Caco-2 (cell line): ENCODE measurements at regions of chr3 and their contacts with region 1.

Region 1: GRCh38 chr3:192834428-192834827 is 83.2 kb downstream of the MB21D2 start:
- DNase-seq: no peak
- H3K4me3 ChIP-seq: no peak overlapping the region
- H3K4me3 Mint-ChIP-seq: no peak overlapping the region
- H3K27ac Mint-ChIP-seq: no peak overlapping the region
- H3K4me1 ChIP-seq: no peaks in the 10 kb centered on the region; the same call in 1 of the 2 replicates
- H3K4me1 Mint-ChIP-seq: no peaks in the 10 kb centered on the region
- H3K27me3 ChIP-seq: no peaks in the 10 kb centered on the region
- H3K27me3 Mint-ChIP-seq: no peaks in the 10 kb centered on the region
- CTCF ChIP-seq: no peak

Region 2: DNA sequence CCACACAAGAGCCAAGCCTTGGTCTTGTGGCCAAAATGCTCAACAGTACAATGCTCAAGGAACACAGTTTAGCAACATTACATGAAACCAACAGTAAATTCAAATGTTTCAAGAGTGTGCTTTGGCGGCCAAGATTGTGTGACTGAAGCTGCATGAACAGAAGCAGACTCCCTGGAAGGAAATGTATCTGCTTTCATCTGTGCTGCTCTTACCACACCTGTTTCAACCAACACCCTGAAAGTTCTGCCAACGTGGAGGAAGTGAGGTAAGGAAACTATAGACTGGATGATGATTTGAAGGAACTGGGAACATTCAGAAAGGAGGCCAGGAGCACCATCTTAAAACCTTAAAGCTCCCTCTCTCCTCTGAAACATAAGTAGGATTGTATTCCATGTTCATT is 27.5 kb after region 1 on chr3:
- CTCF ChIA-PET with region 1: no interaction called
- POLR2A ChIA-PET with region 1: no interaction called
- intact Hi-C with region 1: no loop called
- DNase-seq: no peak
- H3K4me3 ChIP-seq: no peak overlapping the region
- H3K4me3 Mint-ChIP-seq: no peak overlapping the region
- H3K27ac Mint-ChIP-seq: no peak overlapping the region
- H3K4me1 ChIP-seq: peaks cover 9% of the 10 kb centered on the region; the same call in 1 of the 2 replicates
- H3K4me1 Mint-ChIP-seq: peaks cover 22% of the 10 kb centered on the region
- H3K27me3 ChIP-seq: no peaks in the 10 kb centered on the region
- H3K27me3 Mint-ChIP-seq: no peaks in the 10 kb centered on the region
- CTCF ChIP-seq: no peak

Region 3: GRCh38 chr3:192915304-192915703 is 80.9 kb after region 1 on chr3:
- CTCF ChIA-PET with region 1: no interaction called
- POLR2A ChIA-PET with region 1: no interaction called
- intact Hi-C with region 1: no loop called
- DNase-seq: peak; percentile 54 to 63
- H3K4me3 ChIP-seq: no peak overlapping the region
- H3K4me3 Mint-ChIP-seq: peak overlapping the region; percentile 100
- H3K27ac Mint-ChIP-seq: peak overlapping the region; percentile 99
- H3K4me1 ChIP-seq: peaks cover 28% of the 10 kb centered on the region
- H3K4me1 Mint-ChIP-seq: peaks cover 21% of the 10 kb centered on the region
- H3K27me3 ChIP-seq: no peaks in the 10 kb centered on the region
- H3K27me3 Mint-ChIP-seq: no peaks in the 10 kb centered on the region
- CTCF ChIP-seq: peak in 1 of 2 experiments; percentile 28

Region 4: DNA sequence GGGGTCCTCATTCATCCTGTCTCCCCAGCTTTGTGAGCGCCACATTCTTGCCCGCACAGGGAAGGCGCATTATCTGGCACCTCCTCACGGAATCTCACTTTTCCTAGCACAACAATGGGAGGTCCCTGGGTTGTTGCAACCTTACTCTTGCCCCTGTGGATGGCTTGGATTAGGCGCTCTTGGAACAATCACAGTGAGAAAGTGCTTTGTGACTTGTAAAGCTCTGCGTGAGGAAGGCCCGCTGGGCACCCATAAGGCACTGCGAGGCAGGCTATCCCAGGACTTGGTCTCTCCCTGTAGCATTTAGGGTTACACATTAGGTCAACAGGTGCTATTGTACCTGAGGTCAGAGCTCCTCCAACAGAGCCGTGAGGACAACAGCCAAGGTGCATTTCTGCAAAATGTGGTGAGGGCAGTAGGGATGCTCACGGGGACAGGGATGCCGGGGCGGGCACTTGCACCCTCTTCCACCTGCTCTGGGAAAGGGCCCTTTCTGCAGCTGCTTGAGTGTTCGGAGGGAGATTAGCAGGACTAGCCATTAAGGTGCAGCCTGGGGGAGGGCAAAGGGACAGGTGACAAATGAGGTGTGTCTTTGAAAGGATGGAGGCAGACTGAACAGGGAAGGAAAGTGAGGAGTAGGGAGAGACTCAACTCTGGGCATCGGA is 1549.0 kb after region 1 on chr3:
- CTCF ChIA-PET with region 1: no interaction called
- POLR2A ChIA-PET with region 1: interaction called, 10 read pairs
- intact Hi-C with region 1: no loop called
- DNase-seq: no peak
- H3K4me3 ChIP-seq: no peak overlapping the region
- H3K4me3 Mint-ChIP-seq: no peak overlapping the region
- H3K27ac Mint-ChIP-seq: no peak overlapping the region
- H3K4me1 ChIP-seq: peaks cover 11% of the 10 kb centered on the region
- H3K4me1 Mint-ChIP-seq: peaks cover 11% of the 10 kb centered on the region
- H3K27me3 ChIP-seq: no peaks in the 10 kb centered on the region; the same call in 1 of the 2 replicates
- H3K27me3 Mint-ChIP-seq: no peaks in the 10 kb centered on the region
- CTCF ChIP-seq: no peak